AG04449 (cell line): ENCODE measurements at regions of chr2 and their contacts with region 1.

Region 1: GRCh38 chr2:45595721-45596435 is 15.2 kb downstream of the SRBD1 start:
- DNase-seq: peak; percentile 42
- H3K4me3 ChIP-seq: no peak overlapping the region
- CTCF ChIP-seq: no peak

Region 2: DNA sequence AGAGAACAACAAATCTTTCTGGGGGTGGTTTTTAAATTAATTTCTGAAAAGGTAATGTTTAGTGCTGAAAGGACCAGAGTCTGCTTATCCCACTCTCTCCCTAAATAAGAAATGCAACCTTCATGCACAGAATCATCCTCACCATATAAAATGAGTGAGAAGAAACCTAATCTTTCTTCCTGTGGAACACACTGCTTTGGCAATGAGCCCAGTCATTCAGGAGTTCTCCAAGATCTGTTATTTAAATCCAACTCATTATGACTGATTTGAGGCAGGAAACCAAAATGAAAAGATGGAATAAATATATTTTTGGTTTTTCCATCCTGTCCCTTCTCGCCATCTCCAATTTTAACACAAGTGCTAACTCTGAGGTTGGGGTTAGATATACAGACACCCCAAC is 213.1 kb before region 1 on chr2:
- CTCF ChIA-PET with region 1: no interaction called
- POLR2A ChIA-PET with region 1: no interaction called
- DNase-seq: no peak
- H3K4me3 ChIP-seq: no peak overlapping the region
- CTCF ChIP-seq: no peak

Region 3: DNA sequence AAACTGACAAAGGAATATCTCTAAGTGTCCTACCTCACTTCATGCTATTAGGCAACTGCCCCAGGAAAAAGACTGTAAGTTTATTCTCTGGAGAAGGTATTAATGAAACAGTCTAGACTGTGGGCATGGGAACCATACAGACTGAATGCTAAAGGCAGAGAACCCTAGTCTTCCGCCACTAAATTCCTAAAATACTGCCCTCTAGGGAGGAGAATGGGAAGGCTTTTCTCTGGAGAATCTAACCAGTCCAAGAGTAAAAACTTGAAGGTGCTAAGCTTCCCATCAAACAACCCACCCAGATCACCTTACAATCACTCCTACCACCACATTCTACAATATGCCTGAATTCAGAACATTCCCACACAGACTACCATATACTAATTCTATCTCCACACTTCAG is 11.8 kb after region 1 on chr2:
- CTCF ChIA-PET with region 1: interaction called, 29 read pairs
- POLR2A ChIA-PET with region 1: no interaction called
- DNase-seq: no peak
- H3K4me3 ChIP-seq: no peak overlapping the region
- CTCF ChIP-seq: peak; percentile 35

Region 4: GRCh38 chr2:46400016-46400415 is 804.1 kb after region 1 on chr2:
- CTCF ChIA-PET with region 1: no interaction called
- POLR2A ChIA-PET with region 1: no interaction called
- DNase-seq: no peak
- H3K4me3 ChIP-seq: no peak overlapping the region
- CTCF ChIP-seq: no peak